Activated T-helper 1 cell treated with anti-CD3 and anti-CD28 coated beads, Interleukin-12 subunit alpha, Interleukin-12 subunit beta, Interleukin-2, Interleukin-4 antibody, amounts not matched to agents 30 ng/mL and 10 ng/mL and 1 ng/mL, durations not matched to agents 14 hours and 24 hours and 36 hours (primary cell): ENCODE measurements at regions of chr1 and their contacts with region 1.

Region 1: GRCh38 chr1:212256369-212256768 is 28.8 kb upstream of the PPP2R5A start:
- DNase-seq: peak; percentile 53
- H3K4me3 Mint-ChIP-seq: peak overlapping the region; percentile 27
- H3K27ac Mint-ChIP-seq: peak overlapping the region; percentile 83
- H3K4me1 Mint-ChIP-seq: peaks cover 73% of the 10 kb centered on the region
- H3K27me3 Mint-ChIP-seq: no peaks in the 10 kb centered on the region

Region 2: DNA sequence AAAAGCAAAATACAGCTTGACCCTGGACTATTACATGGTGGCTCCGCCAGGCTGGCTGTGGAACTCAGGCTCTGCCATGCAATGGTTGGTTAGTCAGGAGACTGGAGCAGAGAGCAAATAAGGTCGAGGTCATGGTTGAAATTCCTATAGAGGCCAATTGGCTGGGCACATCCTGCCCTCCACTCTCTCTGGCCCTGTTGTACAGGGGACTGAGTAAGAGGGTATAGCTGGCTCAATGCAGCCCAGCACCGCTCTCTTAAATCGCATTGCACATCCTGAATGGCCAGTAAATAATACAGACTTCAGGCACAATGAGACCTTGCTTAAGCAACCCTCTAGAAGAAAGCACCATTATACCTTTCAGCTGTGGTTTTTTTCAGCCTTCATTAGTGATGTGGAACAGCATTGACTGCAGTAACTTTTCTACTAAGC is 30.5 kb before region 1 on chr1:
- intact Hi-C with region 1: loop called (anchors 1 kb)
- DNase-seq: no peak
- H3K4me3 Mint-ChIP-seq: peak overlapping the region; percentile 69
- H3K27ac Mint-ChIP-seq: peak overlapping the region; percentile 96
- H3K4me1 Mint-ChIP-seq: peaks cover 50% of the 10 kb centered on the region
- H3K27me3 Mint-ChIP-seq: no peaks in the 10 kb centered on the region

Region 3: DNA sequence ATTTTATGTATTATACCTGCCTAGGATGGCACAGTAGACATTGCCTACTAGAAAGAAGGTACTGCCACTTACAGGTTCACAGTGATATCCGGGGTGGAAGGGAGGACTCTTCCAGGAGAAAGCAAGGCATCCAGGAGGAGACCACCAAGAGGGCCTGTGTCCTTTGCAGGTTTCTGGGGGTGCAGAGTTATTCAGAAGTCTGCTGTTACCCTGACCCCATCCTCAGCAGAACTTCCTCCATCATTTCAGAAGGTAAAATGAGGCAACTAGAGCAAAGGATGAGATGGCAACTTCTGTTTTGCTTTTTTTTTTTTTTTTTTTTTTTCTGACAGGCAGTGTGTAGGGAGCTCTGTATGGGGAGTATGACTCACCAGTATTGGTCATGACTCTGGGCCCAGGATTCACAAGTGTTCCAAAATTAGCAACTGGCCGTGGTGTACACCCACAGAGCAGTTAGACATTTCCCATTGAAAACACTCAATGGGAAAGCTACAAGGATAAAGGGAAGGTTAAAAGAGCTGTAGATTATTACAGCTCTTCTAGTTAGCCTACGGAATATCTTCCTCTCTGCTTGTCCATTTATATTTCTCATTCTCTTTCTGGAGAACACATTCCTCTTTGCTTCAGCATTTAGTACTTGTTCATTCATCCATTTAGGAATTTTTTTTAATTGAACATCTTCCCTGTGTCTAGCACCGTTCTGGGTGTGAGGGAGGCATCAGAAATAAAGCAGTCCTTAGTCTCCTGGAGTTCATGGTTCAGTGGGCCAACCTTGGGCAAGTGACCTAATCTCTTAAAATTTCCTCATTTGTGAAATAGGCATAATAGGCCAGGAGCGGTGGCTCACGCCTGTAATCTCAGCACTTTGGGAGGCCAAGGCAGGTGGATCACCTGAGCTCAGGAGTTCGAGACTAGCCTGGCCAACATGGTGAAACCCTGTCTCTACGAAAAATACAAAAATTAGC is 21.7 kb before region 1 on chr1:
- intact Hi-C with region 1: loop called (anchors 1 kb)
- DNase-seq: no peak
- H3K4me3 Mint-ChIP-seq: peak overlapping the region; percentile 57
- H3K27ac Mint-ChIP-seq: peak overlapping the region; percentile 67
- H3K4me1 Mint-ChIP-seq: peaks cover 72% of the 10 kb centered on the region
- H3K27me3 Mint-ChIP-seq: no peaks in the 10 kb centered on the region